WTC11 (cell line): ENCODE measurements at regions of chr17 and their contacts with region 1.

Region 1: GRCh38 chr17:42618442-42619150 is 9.1 kb downstream of the TUBG1 start:
- DNase-seq: peak; percentile 70
- ATAC-seq: peak; percentile 97
- H3K4me3 Mint-ChIP-seq: no peak overlapping the region
- H3K27ac Mint-ChIP-seq: peak overlapping the region; percentile 14; the same call in 1 of the 2 replicates
- H3K4me1 Mint-ChIP-seq: peaks cover 12% of the 10 kb centered on the region
- H3K27me3 Mint-ChIP-seq: no peaks in the 10 kb centered on the region
- CTCF ChIP-seq: no peak

Region 2: DNA sequence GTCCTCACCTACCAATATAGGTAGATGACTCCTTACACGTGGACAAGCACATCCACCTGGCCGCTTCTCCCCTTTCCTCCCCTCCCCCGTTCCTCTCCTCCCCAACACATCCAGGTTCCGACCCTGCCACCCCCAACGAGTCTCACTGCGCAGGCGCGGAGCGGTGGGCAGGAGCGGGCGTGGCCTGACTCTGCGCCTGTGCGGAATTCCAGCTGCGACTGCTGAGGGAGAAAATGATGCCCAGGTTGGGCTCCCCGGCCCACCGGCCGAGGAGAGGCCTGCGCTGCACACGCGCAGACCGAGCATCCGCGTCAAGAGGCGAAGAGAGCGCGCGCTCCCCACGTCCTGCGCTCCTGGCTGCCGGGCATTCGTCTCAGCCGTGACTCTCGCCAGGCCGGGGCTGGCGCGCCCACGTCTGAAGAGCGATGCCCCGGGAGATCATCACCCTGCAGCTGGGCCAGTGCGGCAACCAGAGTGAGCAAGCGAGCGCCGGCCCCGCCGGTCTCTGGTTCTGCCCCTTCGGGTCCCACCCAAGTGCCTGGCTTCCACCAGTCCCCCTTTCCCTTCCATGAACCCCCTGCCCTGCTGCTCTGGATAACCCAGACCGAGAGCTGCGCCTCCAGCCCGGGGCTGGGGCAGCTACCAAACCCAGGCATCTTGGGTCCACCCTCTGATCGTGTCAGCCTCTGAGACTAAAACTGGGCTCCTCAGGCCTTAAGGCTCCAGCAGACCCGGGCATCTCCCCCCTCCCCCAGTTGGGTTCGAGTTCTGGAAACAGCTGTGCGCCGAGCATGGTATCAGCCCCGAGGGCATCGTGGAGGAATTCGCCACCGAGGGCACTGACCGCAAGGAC is 40.7 kb after region 1 on chr17 and contains the start of gene TUBG2:
- CTCF ChIA-PET with region 1: interaction called, 12 read pairs
- POLR2A ChIA-PET with region 1: interaction called, 7 read pairs
- DNase-seq: peak; percentile 96
- ATAC-seq: peak; percentile 88
- H3K4me3 Mint-ChIP-seq: peak within 1 kb of the TSS; percentile 85
- H3K27ac Mint-ChIP-seq: peak within 1 kb of the TSS; percentile 57
- H3K4me1 Mint-ChIP-seq: peaks cover 11% of the 10 kb centered on the region
- H3K27me3 Mint-ChIP-seq: peaks cover 3% of the 10 kb centered on the region
- CTCF ChIP-seq: no peak
- total RNA-seq, gene TUBG2: 22.1 to 26.7 TPM (median 22.2 TPM) in 3 replicates

Region 3: DNA sequence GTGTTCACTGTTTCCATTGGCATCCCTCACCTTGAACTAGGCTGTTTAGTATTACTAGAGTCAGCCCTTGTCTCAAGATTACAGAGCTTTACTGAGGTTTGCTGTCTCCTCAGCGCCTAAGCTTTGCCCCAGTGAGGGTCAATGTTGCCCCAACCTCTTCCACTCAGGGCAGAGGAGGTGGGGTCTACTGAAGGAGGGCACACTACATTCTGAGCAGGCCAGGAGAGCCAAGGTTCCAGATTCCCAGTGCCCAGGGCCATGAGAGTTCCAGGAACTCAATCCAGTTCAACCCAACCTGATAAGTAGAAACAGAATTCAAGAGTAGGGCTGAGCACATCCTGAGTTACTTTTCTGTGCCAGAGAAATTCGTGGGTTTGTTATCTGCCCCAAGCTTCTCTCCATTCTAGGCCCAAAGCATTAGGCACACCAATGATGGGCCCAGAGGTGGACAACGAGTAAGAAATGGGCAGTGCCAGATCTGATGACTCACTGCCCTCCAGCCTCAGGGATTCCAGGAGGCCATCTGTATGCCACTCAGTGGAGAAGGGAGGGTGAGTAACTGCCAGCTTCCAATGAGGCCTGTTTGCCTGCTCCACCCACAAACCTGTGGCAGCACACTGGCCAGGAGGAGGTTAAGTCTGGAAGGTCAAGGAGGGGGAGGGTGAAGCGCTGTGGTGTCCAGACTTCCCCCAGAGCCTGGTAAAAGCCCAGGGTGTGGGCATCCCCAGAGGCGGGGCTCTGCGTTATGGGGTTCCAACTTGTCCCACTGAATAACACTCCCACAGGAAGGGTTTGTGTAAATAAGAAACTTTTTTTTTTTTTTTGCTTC is 48.7 kb after region 1 on chr17:
- CTCF ChIA-PET with region 1: interaction called, 21 read pairs
- POLR2A ChIA-PET with region 1: interaction called, 3 read pairs
- DNase-seq: no peak
- ATAC-seq: no peak
- H3K4me3 Mint-ChIP-seq: no peak overlapping the region
- H3K27ac Mint-ChIP-seq: peak overlapping the region; percentile 53; the same call in 1 of the 2 replicates
- H3K4me1 Mint-ChIP-seq: peaks cover 29% of the 10 kb centered on the region
- H3K27me3 Mint-ChIP-seq: peaks cover 3% of the 10 kb centered on the region
- CTCF ChIP-seq: no peak

Region 4: GRCh38 chr17:42691021-42691545 is 72.5 kb after region 1 on chr17:
- CTCF ChIA-PET with region 1: no interaction called
- POLR2A ChIA-PET with region 1: no interaction called
- DNase-seq: no peak
- ATAC-seq: no peak; the same call in 1 of the 2 replicates
- H3K4me3 Mint-ChIP-seq: no peak overlapping the region
- H3K27ac Mint-ChIP-seq: no peak overlapping the region
- H3K4me1 Mint-ChIP-seq: peaks cover 9% of the 10 kb centered on the region; the same call in 1 of the 2 replicates
- H3K27me3 Mint-ChIP-seq: no peaks in the 10 kb centered on the region
- CTCF ChIP-seq: no peak